Natural killer cell (primary cell): ENCODE measurements at regions of chr10 and their contacts with region 1.

Region 1: DNA sequence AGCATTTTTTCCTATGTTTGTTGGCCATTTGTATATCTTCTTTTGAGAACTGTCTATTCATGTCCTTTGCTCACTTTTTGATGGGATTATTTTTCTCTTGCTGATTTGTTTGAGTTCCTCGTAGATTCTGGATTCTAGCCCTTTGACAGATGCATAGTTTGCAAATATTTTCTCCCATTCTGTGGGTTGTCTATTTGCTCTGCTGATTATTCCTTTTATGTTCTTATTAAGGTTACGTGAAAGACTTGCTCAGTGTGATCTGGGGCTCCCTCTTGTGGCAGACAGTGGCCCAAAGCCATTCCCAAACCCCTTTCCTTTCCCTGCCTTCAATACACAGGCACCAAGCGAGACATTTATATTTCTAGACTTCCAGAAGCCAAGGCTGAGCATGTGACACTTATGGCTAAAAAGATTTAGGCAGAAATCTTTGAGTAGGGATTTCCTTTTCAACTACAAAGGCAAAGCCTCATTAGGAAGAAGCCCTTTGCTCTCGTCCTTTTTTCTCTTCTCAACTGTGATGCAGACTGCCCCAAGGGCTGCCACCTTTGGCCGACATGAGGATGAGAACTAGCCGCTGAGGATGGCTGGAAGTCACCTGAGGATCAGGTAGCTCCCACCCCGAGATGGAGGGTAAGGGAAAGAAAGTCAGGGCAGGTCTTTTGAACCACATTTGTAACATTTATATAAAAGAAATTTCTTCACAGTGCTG is 23.6 kb downstream of the ST8SIA6 start:
- DNase-seq: peak; percentile 52 to 84
- ATAC-seq: peak in 2 of 3 donors; percentile 22 to 45
- H3K4me3 ChIP-seq: no peak overlapping the region
- H3K4me3 Mint-ChIP-seq: peak overlapping the region; percentile 54
- H3K27ac ChIP-seq: no peak overlapping the region
- H3K27ac Mint-ChIP-seq: peak overlapping the region; percentile 19 to 95
- H3K4me1 ChIP-seq: peaks cover 47% of the 10 kb centered on the region
- H3K4me1 Mint-ChIP-seq: peaks cover 67 to 74% of the 10 kb centered on the region in 2 donors
- H3K27me3 ChIP-seq: no peaks in the 10 kb centered on the region
- H3K27me3 Mint-ChIP-seq: no peaks in the 10 kb centered on the region
- CTCF ChIP-seq: peak; percentile 90

Region 2: DNA sequence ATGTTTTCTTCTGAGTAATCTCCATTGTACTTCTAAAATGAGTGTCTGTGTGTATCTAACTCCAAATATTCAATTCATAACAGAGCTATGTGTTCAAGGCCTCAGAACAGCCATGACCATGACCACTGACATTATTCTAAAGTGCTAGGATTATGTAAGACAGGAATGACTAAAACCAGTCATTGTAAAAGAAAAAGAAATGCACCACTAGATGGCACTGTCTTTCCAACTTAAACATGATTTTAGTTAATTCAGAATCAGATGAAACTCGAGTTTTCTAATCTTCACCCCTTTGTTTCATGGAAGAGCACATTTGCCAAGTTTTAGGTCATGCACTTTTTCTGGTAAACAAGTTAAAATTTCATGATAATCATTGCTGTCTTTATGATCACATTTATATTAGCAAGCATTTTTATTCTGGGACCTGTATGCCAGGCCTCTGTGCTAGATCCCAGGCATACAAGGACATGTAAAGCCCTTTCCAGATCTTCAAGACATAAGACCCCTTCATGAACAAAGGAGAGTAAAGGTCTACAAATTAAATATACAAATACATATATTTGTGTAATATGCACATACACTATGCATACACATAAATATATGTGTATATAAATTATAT is 587.4 kb before region 1 on chr10:
- intact Hi-C with region 1: loop called (anchors 10 kb)
- DNase-seq: peak in 1 of 2 donors; percentile 79
- ATAC-seq: peak; percentile 65 to 69 (median 67)
- H3K4me3 ChIP-seq: no peak overlapping the region
- H3K4me3 Mint-ChIP-seq: no peak overlapping the region
- H3K27ac ChIP-seq: no peak overlapping the region
- H3K27ac Mint-ChIP-seq: no peak overlapping the region
- H3K4me1 ChIP-seq: no peaks in the 10 kb centered on the region
- H3K4me1 Mint-ChIP-seq: peaks cover 0 to 6% of the 10 kb centered on the region in 2 donors
- H3K27me3 ChIP-seq: no peaks in the 10 kb centered on the region
- H3K27me3 Mint-ChIP-seq: peaks cover 2 to 8% of the 10 kb centered on the region in 2 donors
- CTCF ChIP-seq: peak; percentile 75

Region 3: DNA sequence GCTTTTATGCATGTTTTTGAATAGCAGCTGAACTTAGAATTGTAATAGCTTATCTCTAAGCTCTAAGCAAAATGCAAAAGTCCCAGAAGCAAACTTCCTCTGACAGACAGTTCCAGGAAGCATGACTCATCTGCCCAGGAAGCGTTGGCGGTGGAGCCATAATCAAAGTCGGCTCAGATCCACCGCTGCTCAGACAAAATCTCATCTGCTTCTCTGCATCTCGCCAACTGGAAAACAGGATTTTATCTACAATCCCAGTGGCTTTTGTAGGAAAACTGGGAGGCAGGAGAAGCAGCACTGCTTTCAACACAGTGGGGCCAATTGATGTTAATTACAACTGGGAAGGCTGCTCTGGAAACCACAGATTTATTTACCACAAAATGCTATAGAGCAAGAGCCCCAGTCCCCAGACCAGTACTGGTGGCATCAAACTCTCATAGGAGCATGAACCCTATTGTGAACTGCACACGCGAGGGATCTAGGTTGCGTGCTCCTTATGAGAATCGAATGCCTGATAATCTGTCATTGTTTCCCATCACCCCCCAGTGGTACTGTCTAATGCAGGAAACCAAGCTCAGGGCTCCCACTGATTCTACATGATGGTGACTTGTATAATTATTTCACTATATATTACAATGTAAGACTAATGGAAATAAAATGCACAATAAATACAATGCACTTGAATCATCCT is 401.1 kb before region 1 on chr10:
- intact Hi-C with region 1: loop called (anchors 5 kb)
- DNase-seq: peak; percentile 60 to 89
- ATAC-seq: peak; percentile 43 to 69 (median 61)
- H3K4me3 ChIP-seq: peak overlapping the region; percentile 22
- H3K4me3 Mint-ChIP-seq: peak overlapping the region; percentile 83
- H3K27ac ChIP-seq: peak overlapping the region; percentile 87
- H3K27ac Mint-ChIP-seq: peak overlapping the region; percentile 97
- H3K4me1 ChIP-seq: peaks cover 51% of the 10 kb centered on the region
- H3K4me1 Mint-ChIP-seq: peaks cover 68 to 74% of the 10 kb centered on the region in 2 donors
- H3K27me3 ChIP-seq: no peaks in the 10 kb centered on the region
- H3K27me3 Mint-ChIP-seq: no peaks in the 10 kb centered on the region
- CTCF ChIP-seq: no peak

Region 4: DNA sequence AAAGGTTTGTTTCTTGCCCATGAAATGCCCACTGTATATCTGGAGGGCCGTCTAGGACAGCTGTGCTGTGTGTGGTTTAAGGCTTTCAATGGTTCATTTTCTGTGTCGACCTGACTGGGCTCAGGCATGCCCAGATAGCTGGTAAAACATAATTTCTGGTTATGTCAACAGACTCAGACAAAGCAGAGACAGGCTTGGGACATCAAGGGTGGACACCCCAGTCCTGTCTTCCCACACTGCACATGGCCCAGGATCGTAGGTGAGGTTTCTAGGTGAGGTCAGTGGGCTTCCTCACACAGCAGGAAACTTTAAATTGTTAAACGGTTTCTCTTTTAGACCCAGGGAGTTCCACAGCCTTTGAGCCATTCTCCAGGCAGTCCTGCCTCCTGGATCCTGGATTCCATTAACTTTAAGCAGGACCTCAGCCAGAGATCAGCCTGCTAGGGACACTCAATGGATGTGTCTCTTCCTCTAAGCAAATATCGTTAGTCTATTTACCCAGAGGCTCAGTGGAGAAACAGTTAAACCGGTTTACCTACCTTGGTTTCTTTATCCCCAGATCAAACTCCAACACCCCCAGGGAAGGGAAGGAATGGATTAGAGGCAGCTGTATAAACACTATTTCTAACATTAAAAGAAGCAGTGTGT is 42.8 kb before region 1 on chr10:
- intact Hi-C with region 1: no loop called
- DNase-seq: no peak
- ATAC-seq: no peak
- H3K4me3 ChIP-seq: no peak overlapping the region
- H3K4me3 Mint-ChIP-seq: no peak overlapping the region
- H3K27ac ChIP-seq: no peak overlapping the region
- H3K27ac Mint-ChIP-seq: no peak overlapping the region
- H3K4me1 ChIP-seq: no peaks in the 10 kb centered on the region
- H3K4me1 Mint-ChIP-seq: no peaks in the 10 kb centered on the region
- H3K27me3 ChIP-seq: no peaks in the 10 kb centered on the region
- H3K27me3 Mint-ChIP-seq: no peaks in the 10 kb centered on the region
- CTCF ChIP-seq: no peak

Region 5: DNA sequence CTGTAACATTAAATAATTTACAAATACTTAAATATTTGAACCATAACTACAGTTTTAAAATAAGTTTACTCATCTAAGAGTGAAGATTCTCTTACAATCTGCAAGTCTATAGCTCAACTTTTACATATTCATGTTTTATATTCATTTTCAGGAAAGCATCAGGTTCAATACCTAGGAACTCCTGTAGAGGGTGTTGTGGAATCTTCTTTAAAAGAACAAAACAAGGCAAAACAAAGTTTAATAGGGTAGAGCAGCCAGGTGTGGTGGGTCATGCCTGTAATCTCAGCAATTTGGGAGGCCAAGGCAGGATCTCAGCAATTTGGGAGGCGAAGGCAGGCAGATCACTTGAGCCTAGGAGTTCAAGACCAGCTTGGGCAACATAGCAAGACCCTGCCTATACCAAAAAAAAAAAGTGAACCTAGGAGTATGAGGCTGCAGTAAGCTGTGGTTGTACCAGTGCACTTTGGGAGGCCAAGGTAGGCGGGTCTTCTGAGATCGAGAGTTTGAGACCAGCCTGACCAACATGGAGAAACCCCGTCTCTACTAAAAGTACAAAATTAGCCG is 21.5 kb before region 1 on chr10:
- intact Hi-C with region 1: loop called (anchors 1 kb)
- DNase-seq: peak in 1 of 2 donors; percentile 68
- ATAC-seq: peak; percentile 70 to 80 (median 75)
- H3K4me3 ChIP-seq: no peak overlapping the region
- H3K4me3 Mint-ChIP-seq: no peak overlapping the region
- H3K27ac ChIP-seq: no peak overlapping the region
- H3K27ac Mint-ChIP-seq: peak overlapping the region in 1 of 2 donors; percentile 79
- H3K4me1 ChIP-seq: peaks cover 5% of the 10 kb centered on the region
- H3K4me1 Mint-ChIP-seq: peaks cover 26 to 31% of the 10 kb centered on the region in 2 donors
- H3K27me3 ChIP-seq: no peaks in the 10 kb centered on the region
- H3K27me3 Mint-ChIP-seq: no peaks in the 10 kb centered on the region
- CTCF ChIP-seq: no peak

Region 6: GRCh38 chr10:17454161-17455014 is 23.6 kb after region 1 on chr10 and contains the start of gene ST8SIA6:
- intact Hi-C with region 1: loop called (anchors 2 kb)
- DNase-seq: peak; percentile 68 to 73
- ATAC-seq: peak; percentile 70 to 76 (median 75)
- H3K4me3 ChIP-seq: peak within 1 kb of the TSS; percentile 70
- H3K4me3 Mint-ChIP-seq: peak within 1 kb of the TSS; percentile 93
- H3K27ac ChIP-seq: peak within 1 kb of the TSS; percentile 75
- H3K27ac Mint-ChIP-seq: peak within 1 kb of the TSS; percentile 87 to 94
- H3K4me1 ChIP-seq: peaks cover 19% of the 10 kb centered on the region
- H3K4me1 Mint-ChIP-seq: peaks cover 35 to 38% of the 10 kb centered on the region in 2 donors
- H3K27me3 ChIP-seq: no peaks in the 10 kb centered on the region
- H3K27me3 Mint-ChIP-seq: no peaks in the 10 kb centered on the region
- CTCF ChIP-seq: peak; percentile 11
- total RNA-seq, gene ST8SIA6: 12.2 to 19.7 (median 12.5) TPM

Region 7: DNA sequence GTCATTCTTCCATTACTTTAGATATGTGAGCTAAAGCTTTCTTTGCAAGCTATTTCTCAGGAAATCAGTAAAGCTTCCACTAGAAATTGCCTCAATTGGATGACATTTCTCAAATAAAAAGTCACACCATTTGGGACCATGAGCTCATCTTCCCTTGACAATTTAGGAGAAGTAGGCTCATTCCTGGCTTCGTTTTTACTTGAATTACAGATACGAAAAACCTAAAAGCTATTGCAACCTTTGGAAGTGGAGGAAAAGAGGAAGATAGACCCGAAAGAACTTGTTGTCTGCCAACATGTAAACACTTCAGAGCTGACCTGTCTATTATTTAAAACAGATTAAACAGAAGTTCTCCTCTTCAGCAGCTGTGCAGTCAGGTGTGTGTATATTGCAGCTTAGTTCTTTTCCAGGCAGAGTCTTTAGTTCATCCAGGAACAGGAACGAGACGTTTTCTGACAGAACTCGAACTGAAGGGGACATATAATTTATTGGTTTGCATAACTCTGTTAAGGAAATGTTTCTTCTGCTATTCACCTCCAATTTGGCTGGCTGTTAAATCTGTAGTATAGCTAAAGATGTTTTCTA is 66.7 kb after region 1 on chr10:
- intact Hi-C with region 1: no loop called
- DNase-seq: no peak
- ATAC-seq: no peak
- H3K4me3 ChIP-seq: no peak overlapping the region
- H3K4me3 Mint-ChIP-seq: no peak overlapping the region
- H3K27ac ChIP-seq: no peak overlapping the region
- H3K27ac Mint-ChIP-seq: no peak overlapping the region
- H3K4me1 ChIP-seq: peaks cover 3% of the 10 kb centered on the region
- H3K4me1 Mint-ChIP-seq: peaks cover 11 to 14% of the 10 kb centered on the region in 2 donors
- H3K27me3 ChIP-seq: no peaks in the 10 kb centered on the region
- H3K27me3 Mint-ChIP-seq: no peaks in the 10 kb centered on the region
- CTCF ChIP-seq: no peak

Region 8: GRCh38 chr10:17512341-17513001 is 81.7 kb after region 1 on chr10:
- intact Hi-C with region 1: loop called (anchors 2 kb)
- DNase-seq: no peak
- ATAC-seq: no peak
- H3K4me3 ChIP-seq: no peak overlapping the region
- H3K4me3 Mint-ChIP-seq: peak overlapping the region; percentile 37
- H3K27ac ChIP-seq: peak overlapping the region; percentile 98
- H3K27ac Mint-ChIP-seq: peak overlapping the region; percentile 87 to 96
- H3K4me1 ChIP-seq: peaks cover 48% of the 10 kb centered on the region
- H3K4me1 Mint-ChIP-seq: peaks cover 45 to 48% of the 10 kb centered on the region in 2 donors
- H3K27me3 ChIP-seq: no peaks in the 10 kb centered on the region
- H3K27me3 Mint-ChIP-seq: no peaks in the 10 kb centered on the region
- CTCF ChIP-seq: no peak

Region 9: GRCh38 chr10:17643755-17644484 is 213.1 kb after region 1 on chr10 and contains the start of gene STAM:
- intact Hi-C with region 1: loop called (anchors 5 kb)
- DNase-seq: peak; percentile 93 to 95
- ATAC-seq: peak; percentile 83 to 94 (median 92)
- H3K4me3 ChIP-seq: peak within 1 kb of the TSS; percentile 88
- H3K4me3 Mint-ChIP-seq: peak within 1 kb of the TSS; percentile 98
- H3K27ac ChIP-seq: peak within 1 kb of the TSS; percentile 96
- H3K27ac Mint-ChIP-seq: peak within 1 kb of the TSS; percentile 98
- H3K4me1 ChIP-seq: peaks cover 28% of the 10 kb centered on the region
- H3K4me1 Mint-ChIP-seq: peaks cover 50 to 53% of the 10 kb centered on the region in 2 donors
- H3K27me3 ChIP-seq: no peaks in the 10 kb centered on the region
- H3K27me3 Mint-ChIP-seq: no peaks in the 10 kb centered on the region
- CTCF ChIP-seq: no peak
- total RNA-seq, gene STAM: 37.8 to 40.2 (median 38.6) TPM

Region 10: GRCh38 chr10:19003341-19003740 is 1572.5 kb after region 1 on chr10:
- intact Hi-C with region 1: no loop called
- DNase-seq: no peak
- ATAC-seq: no peak
- H3K4me3 ChIP-seq: no peak overlapping the region
- H3K4me3 Mint-ChIP-seq: no peak overlapping the region
- H3K27ac ChIP-seq: no peak overlapping the region
- H3K27ac Mint-ChIP-seq: no peak overlapping the region
- H3K4me1 ChIP-seq: no peaks in the 10 kb centered on the region
- H3K4me1 Mint-ChIP-seq: no peaks in the 10 kb centered on the region
- H3K27me3 ChIP-seq: no peaks in the 10 kb centered on the region
- H3K27me3 Mint-ChIP-seq: no peaks in the 10 kb centered on the region
- CTCF ChIP-seq: no peak